ENCODE measurements at regions of chr10 and their contacts with region 1.

Region 1: DNA sequence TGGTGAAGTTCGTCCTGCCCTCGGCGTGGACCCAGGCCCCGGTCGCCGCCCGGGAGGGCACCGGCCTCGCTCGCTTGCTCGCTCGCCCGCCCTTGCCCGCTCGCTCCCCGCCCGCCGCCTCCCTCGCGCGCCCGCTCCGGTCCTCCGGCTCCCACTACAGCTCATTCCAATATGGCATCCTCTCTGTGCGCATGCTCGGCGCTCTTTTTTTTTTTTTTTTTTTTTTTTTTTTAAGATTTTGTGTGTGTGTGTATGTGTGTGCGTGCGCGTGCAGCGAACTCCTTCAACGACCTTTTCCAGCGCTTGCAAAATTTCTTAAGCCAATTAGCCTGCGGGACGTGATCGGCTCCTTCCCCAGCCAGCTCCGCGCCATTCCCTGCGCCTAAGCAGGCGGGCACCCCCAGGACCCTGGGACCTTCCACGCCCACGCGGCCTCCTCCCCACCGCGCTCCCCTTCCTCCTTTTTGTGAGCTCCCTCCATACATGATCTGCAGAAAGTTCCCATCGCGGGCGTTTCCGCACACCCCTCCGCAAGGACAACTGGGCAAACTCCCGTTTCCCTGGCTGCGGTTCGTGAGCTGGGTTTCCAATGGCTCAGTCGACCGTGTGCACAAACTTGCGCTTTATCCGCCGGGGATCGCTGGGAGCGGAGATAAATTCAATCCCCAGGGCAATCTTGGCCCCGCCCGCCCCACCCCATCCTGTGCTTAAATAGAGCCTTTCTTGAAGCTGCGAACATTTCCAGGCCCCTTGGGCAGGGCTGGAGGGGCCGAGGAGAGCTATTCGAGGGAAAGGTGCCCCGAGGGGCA is at the start of gene SFMBT2:
- DNase-seq: peak; percentile 68 to 80 (median 75)
- ATAC-seq: peak; percentile 24 to 75 (median 64)
- H3K4me3 ChIP-seq: peak within 1 kb of the TSS; percentile 64 to 96 (median 87)
- H3K27ac ChIP-seq: peak within 1 kb of the TSS; percentile 54 to 96 (median 92)
- H3K4me1 ChIP-seq: peaks cover under 1 to 51% (median 34%) of the 10 kb centered on the region in 12 donors
- H3K27me3 ChIP-seq: peaks cover 0 to 22% (median 0%) of the 10 kb centered on the region in 9 donors
- CTCF ChIP-seq: peak in 7 of 12 donors; percentile 9 to 31 (median 18)
- POLR2A ChIP-seq: no peak
- total RNA-seq, gene SFMBT2: 3.7 to 25.8 (median 10.0) TPM

Region 2: GRCh38 chr10:6416892-6417512 is 994.1 kb before region 1 on chr10:
- intact Hi-C with region 1: loop called in 1 of 10 experiments (anchors 10 kb)
- DNase-seq: no peak
- ATAC-seq: peak in 3 of 4 donors; percentile 55 to 69 (median 59)
- H3K4me3 ChIP-seq: no peak overlapping the region
- H3K27ac ChIP-seq: no peak overlapping the region
- H3K4me1 ChIP-seq: no peaks in the 10 kb centered on the region
- H3K27me3 ChIP-seq: peaks cover 0 to 3% (median 0%) of the 10 kb centered on the region in 9 donors
- CTCF ChIP-seq: peak; percentile 44 to 72 (median 56)
- POLR2A ChIP-seq: no peak

Region 3: DNA sequence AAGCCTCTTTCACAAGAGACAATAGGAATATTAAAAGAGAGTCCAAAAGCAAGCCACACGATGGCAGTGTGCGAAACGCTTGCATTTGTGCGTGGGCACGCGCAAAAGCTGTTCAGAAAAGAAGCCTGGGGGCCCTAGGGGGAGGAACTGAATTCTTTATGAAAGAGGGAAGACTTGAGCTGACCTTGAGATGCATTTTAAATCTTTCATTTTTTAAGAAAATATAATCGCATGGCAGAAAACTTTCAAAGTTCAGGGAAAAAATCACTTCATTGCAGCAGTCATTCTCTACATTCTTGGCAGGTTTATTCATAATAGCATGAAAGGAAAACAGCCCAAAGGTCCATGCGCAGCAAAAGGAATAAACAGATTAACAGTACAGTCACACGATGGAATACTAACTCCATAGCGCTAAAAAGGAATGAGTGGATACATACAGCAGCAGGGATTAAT is 624.5 kb before region 1 on chr10:
- intact Hi-C with region 1: loop called in 5 of 10 experiments (anchors 5 to 10 kb)
- DNase-seq: no peak
- ATAC-seq: peak in 1 of 4 donors; percentile 63
- H3K4me3 ChIP-seq: no peak overlapping the region
- H3K27ac ChIP-seq: no peak overlapping the region
- H3K4me1 ChIP-seq: no peaks in the 10 kb centered on the region
- H3K27me3 ChIP-seq: no peaks in the 10 kb centered on the region
- CTCF ChIP-seq: peak in 8 of 12 donors; percentile 25 to 45 (median 28)
- POLR2A ChIP-seq: no peak

Region 4: DNA sequence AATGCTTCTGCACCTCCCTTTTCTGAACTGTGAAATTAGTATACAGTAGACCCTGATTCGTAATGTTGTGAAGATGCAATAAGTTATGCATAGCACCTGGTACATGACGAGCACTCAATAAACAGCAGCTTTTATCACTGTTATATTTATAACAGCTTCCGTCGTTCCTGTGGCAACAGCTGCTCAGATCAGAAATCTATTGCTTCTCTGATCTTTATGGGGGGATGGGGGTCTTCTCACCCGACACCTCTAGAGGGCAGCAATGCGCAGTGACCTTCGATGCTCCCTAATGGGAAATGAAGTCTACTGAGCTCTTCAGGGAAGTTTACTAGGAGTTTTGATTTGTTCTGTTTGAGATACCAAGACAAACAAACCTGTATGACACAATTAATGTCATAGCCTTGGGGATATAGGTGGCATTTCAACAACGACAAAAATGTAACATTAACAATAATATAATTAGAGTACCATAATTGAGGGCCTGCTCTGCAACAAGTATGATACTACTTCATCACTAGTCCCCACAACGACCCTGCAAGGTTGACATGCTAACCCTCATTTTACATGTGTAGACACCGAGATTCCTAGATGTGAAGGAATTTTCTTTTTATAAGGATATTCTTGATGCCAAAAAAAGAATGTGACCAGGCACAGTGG is 289.8 kb before region 1 on chr10:
- intact Hi-C with region 1: loop called in 9 of 10 experiments (anchors 2 to 5 kb)
- DNase-seq: peak in 4 of 5 donors; percentile 28 to 45 (median 40)
- ATAC-seq: peak in 3 of 4 donors; percentile 60 to 66 (median 61)
- H3K4me3 ChIP-seq: no peak overlapping the region
- H3K27ac ChIP-seq: no peak overlapping the region
- H3K4me1 ChIP-seq: peaks cover 0 to 2% (median 0%) of the 10 kb centered on the region in 12 donors
- H3K27me3 ChIP-seq: peaks cover 0 to 12% (median 0%) of the 10 kb centered on the region in 9 donors
- CTCF ChIP-seq: peak; percentile 48 to 75 (median 68)
- POLR2A ChIP-seq: no peak

Region 5: GRCh38 chr10:7133278-7133677 is 277.8 kb before region 1 on chr10:
- intact Hi-C with region 1: no loop called
- DNase-seq: no peak
- ATAC-seq: no peak
- H3K4me3 ChIP-seq: no peak overlapping the region
- H3K27ac ChIP-seq: no peak overlapping the region
- H3K4me1 ChIP-seq: no peaks in the 10 kb centered on the region
- H3K27me3 ChIP-seq: peaks cover 0 to 18% (median 0%) of the 10 kb centered on the region in 9 donors
- CTCF ChIP-seq: no peak
- POLR2A ChIP-seq: no peak

Region 6: GRCh38 chr10:7260412-7260900 is 150.6 kb before region 1 on chr10:
- intact Hi-C with region 1: loop called (anchors 1 to 2 kb)
- DNase-seq: peak in 4 of 5 donors; percentile 73 to 87 (median 80)
- ATAC-seq: peak; percentile 94 to 96 (median 96)
- H3K4me3 ChIP-seq: no peak overlapping the region
- H3K27ac ChIP-seq: peak overlapping the region; percentile 17 to 72 (median 60)
- H3K4me1 ChIP-seq: peaks cover 3 to 55% (median 26%) of the 10 kb centered on the region in 12 donors
- H3K27me3 ChIP-seq: no peaks in the 10 kb centered on the region
- CTCF ChIP-seq: peak; percentile 65 to 88 (median 78)
- POLR2A ChIP-seq: no peak

Region 7: DNA sequence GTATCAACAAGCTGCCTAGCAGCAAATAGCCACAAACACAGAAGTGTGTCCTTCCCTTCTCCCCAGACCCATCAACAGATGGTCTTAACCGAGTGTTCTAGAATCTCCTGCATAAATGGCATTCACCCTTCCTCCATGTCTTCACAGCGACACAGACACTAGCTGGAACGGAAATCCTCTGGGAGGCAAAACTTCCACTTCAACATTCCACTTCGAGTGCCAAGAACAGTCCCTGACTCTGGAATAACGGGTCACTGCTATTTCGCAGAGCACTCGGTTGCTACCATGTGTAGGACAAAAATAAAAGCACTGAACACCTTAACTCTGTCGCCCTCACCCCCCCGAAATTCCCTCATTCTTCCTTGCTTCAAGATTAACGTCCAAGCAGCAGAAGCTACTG is 65.3 kb before region 1 on chr10:
- intact Hi-C with region 1: loop called in 3 of 10 experiments (anchors 5 kb)
- DNase-seq: peak in 4 of 5 donors; percentile 40 to 59 (median 52)
- ATAC-seq: peak; percentile 88 to 92 (median 90)
- H3K4me3 ChIP-seq: peak overlapping the region in 1 of 12 donors; percentile 18
- H3K27ac ChIP-seq: peak overlapping the region; percentile 23 to 86 (median 56)
- H3K4me1 ChIP-seq: peaks cover 0 to 26% (median 18%) of the 10 kb centered on the region in 12 donors
- H3K27me3 ChIP-seq: no peaks in the 10 kb centered on the region
- CTCF ChIP-seq: no peak
- POLR2A ChIP-seq: no peak

Region 8: DNA sequence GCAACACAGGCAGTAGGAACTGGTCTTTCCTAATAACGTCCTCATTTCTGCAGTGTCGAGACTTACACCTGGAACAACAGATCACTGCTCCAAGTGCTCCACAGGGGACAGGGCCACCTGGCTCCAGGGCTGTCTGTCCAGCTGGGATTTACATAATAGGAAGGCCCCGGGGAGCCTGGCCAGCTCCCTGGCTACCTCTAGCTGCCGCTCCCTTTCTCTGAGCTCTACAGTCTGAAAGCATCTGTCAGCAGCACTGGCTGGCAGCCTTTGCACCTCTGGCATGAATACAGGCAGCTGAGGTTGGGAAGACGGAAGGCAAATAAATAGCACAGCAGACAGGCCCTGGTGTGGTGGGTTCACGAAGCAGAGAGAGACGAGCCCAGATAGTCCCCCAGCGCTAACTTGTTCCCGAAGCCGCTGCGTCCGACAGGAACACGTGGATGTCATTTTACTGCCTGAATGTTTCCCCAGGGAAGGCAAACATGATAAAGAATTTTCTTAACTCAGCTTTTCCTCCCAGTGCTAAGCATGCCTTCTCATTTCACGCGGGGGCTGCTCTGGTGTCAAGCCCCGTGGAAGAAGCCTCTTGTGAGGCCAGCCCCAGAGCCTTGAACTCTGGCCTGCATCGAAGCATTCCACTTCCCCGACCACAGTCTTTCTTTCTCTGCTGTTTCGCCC is 150.3 kb after region 1 on chr10:
- intact Hi-C with region 1: no loop called
- DNase-seq: peak; percentile 79 to 91 (median 85)
- ATAC-seq: peak; percentile 87 to 93 (median 93)
- H3K4me3 ChIP-seq: no peak overlapping the region
- H3K27ac ChIP-seq: peak overlapping the region; percentile 4 to 80 (median 44)
- H3K4me1 ChIP-seq: peaks cover 0 to 47% (median 28%) of the 10 kb centered on the region in 12 donors
- H3K27me3 ChIP-seq: no peaks in the 10 kb centered on the region
- CTCF ChIP-seq: peak in 5 of 12 donors; percentile 9 to 30 (median 24)
- POLR2A ChIP-seq: no peak